Activated naive CD4-positive, alpha-beta T cell treated with anti-CD3 and anti-CD28 coated beads for 36 hours (primary cell): ENCODE measurements at regions of chr7 and their contacts with region 1.

Region 1: GRCh38 chr7:131513245-131514061 is 43.0 kb downstream of the PODXL start:
- DNase-seq: peak; percentile 90
- H3K4me3 Mint-ChIP-seq: no peak overlapping the region
- H3K27ac Mint-ChIP-seq: no peak overlapping the region
- H3K4me1 Mint-ChIP-seq: peaks cover 10% of the 10 kb centered on the region
- H3K27me3 Mint-ChIP-seq: peaks cover 6% of the 10 kb centered on the region

Region 2: GRCh38 chr7:130831817-130832481 is 681.5 kb before region 1 on chr7:
- CTCF ChIA-PET with region 1: no interaction called
- intact Hi-C with region 1: loop called (anchors 5 kb)
- DNase-seq: no peak
- H3K4me3 Mint-ChIP-seq: no peak overlapping the region
- H3K27ac Mint-ChIP-seq: no peak overlapping the region
- H3K4me1 Mint-ChIP-seq: no peaks in the 10 kb centered on the region
- H3K27me3 Mint-ChIP-seq: peaks cover 8% of the 10 kb centered on the region

Region 3: DNA sequence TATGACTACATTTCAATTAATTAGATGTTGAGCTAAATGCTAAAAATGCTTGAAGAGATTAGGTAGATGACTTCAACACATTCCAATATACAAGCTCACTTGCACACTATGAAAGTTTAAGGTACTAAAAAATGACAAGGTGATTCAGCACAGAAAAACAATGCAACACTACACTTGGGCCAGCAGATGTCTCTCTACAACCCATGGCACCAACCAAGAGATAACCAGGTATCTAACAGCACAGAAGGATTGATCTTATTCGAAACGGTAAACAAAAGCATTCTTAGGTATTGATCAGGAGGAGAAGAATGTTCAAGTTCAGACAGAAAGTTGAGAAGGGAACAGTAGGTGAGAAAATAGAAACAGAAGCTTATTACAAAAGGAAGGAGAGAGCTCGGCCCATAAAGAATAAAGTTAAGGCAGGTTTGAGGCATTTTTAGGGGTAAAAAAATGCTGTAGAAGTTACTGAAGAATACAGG is 531.3 kb before region 1 on chr7:
- CTCF ChIA-PET with region 1: no interaction called
- intact Hi-C with region 1: loop called (anchors 2 kb)
- DNase-seq: peak; percentile 54
- H3K4me3 Mint-ChIP-seq: no peak overlapping the region
- H3K27ac Mint-ChIP-seq: no peak overlapping the region
- H3K4me1 Mint-ChIP-seq: peaks cover 55% of the 10 kb centered on the region
- H3K27me3 Mint-ChIP-seq: no peaks in the 10 kb centered on the region

Region 4: DNA sequence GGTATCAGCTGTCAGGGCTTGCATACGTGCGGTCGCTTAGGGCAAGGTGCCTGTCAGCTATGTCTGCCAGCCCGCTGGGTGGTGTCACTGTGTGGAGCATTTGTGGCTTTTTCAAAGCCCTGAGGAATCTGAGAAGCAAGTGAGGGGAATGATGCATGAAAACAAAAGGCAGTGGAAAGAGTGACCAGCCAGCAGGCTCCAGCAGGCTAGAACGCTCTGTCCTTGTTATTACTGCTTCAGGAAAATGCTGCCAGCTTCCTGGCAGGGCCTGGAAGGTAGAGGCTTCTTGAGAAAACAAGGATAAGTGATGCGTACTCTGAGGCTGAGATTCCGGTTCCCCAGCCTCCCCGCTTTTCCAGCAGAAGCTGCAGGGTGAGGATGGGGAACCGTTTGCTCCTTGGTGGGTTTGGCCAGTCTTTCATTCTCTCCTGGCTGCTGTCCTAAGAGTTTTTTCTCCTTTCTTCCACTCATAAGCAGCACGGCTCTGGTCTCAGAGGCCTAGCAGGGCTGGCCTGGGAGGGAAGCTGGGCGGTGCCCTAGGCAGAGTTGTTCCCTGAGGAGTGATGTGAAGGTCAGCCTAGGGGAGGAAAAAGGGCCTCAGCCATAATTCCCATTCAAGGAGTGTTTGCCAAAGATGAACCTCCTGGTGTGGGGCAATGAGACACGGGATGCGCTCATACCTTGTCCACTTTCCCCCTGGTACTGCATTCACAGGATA is 228.6 kb before region 1 on chr7:
- CTCF ChIA-PET with region 1: no interaction called
- intact Hi-C with region 1: no loop called
- DNase-seq: no peak
- H3K4me3 Mint-ChIP-seq: no peak overlapping the region
- H3K27ac Mint-ChIP-seq: no peak overlapping the region
- H3K4me1 Mint-ChIP-seq: no peaks in the 10 kb centered on the region
- H3K27me3 Mint-ChIP-seq: no peaks in the 10 kb centered on the region

Region 5: GRCh38 chr7:131327626-131328376 is 185.7 kb before region 1 on chr7 and contains the start of gene MKLN1:
- CTCF ChIA-PET with region 1: no interaction called
- intact Hi-C with region 1: loop called (anchors 5 kb)
- DNase-seq: peak; percentile 90
- H3K4me3 Mint-ChIP-seq: peak within 1 kb of the TSS; percentile 98
- H3K27ac Mint-ChIP-seq: peak within 1 kb of the TSS; percentile 96
- H3K4me1 Mint-ChIP-seq: peaks cover 54% of the 10 kb centered on the region
- H3K27me3 Mint-ChIP-seq: no peaks in the 10 kb centered on the region
- total RNA-seq, gene MKLN1: 29.8 to 34.9 TPM

Region 6: GRCh38 chr7:131493581-131493980 is 19.9 kb before region 1 on chr7:
- CTCF ChIA-PET with region 1: interaction called, 25 read pairs
- intact Hi-C with region 1: no loop called
- DNase-seq: no peak
- H3K4me3 Mint-ChIP-seq: no peak overlapping the region
- H3K27ac Mint-ChIP-seq: no peak overlapping the region
- H3K4me1 Mint-ChIP-seq: no peaks in the 10 kb centered on the region
- H3K27me3 Mint-ChIP-seq: no peaks in the 10 kb centered on the region

Region 7: GRCh38 chr7:131654668-131655326 is 141.3 kb after region 1 on chr7:
- CTCF ChIA-PET with region 1: interaction called, 13 read pairs
- intact Hi-C with region 1: loop called (anchors 1 kb)
- DNase-seq: peak; percentile 91
- H3K4me3 Mint-ChIP-seq: no peak overlapping the region
- H3K27ac Mint-ChIP-seq: no peak overlapping the region
- H3K4me1 Mint-ChIP-seq: no peaks in the 10 kb centered on the region
- H3K27me3 Mint-ChIP-seq: peaks cover 3% of the 10 kb centered on the region

Region 8: GRCh38 chr7:132557489-132558044 is 1044.1 kb after region 1 on chr7:
- CTCF ChIA-PET with region 1: no interaction called
- intact Hi-C with region 1: no loop called
- DNase-seq: no peak
- H3K4me3 Mint-ChIP-seq: no peak overlapping the region
- H3K27ac Mint-ChIP-seq: no peak overlapping the region
- H3K4me1 Mint-ChIP-seq: peaks cover 3% of the 10 kb centered on the region
- H3K27me3 Mint-ChIP-seq: no peaks in the 10 kb centered on the region